ENCODE measurements at regions of chr2 and their contacts with region 1.

Region 1: DNA sequence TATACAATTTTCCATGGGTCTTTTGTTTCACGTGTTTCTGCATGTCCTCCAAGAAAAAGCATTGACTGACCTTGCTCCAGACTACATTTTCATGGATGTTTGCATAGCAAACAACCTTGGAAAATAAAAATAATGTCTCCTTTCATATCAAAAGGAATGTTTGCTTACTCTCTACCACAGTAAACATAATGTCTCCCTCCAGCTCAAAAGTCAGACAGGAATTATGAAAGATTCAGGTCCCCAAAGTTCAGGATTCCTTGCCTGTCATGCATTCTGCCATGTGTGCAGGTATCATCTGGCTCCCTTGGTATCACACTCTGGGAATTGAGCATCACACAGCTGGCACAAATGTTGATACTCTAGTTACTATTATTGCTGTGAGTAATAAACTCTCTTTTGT is 103.1 kb upstream of the ZC3H15 start:
- DNase-seq: peak; percentile 98
- ATAC-seq: peak; percentile 99
- H3K4me3 ChIP-seq: peak overlapping the region in 2 of 3 experiments; percentile 3 to 7; a peak in 1 of 6 replicates
- H3K27ac ChIP-seq: peak overlapping the region; percentile 76
- H3K4me1 ChIP-seq: peaks cover 62% of the 10 kb centered on the region
- H3K27me3 ChIP-seq: no peaks in the 10 kb centered on the region
- CTCF ChIP-seq: no peak
- EP300 ChIP-seq: peak; percentile 76 to 98
- POLR2A ChIP-seq: no peak
- RAD21 ChIP-seq: no peak

Region 2: DNA sequence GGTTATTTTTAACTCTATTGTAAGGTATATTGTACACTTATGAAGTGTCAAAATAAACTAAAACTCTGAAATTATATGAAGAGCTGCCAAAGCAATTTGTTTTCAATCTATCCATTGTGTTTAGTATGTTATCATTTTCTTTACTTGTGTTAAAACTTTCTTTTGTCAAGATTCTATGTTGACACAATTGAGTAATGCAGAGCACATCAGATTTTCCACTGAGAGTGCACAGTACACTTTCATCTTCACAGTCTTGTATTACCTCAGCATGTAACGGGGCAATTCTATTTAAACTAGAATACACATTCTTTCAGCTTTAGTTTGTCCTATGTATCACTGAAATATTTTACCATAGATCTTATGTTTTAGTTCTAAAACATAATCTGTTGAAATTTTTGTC is 201.3 kb before region 1 on chr2:
- CTCF ChIA-PET with region 1: no interaction called
- POLR2A ChIA-PET with region 1: no interaction called
- in situ Hi-C with region 1: no loop called
- intact Hi-C with region 1: loop called (anchors 1 kb)
- DNase-seq: peak; percentile 93
- ATAC-seq: peak; percentile 100
- H3K4me3 ChIP-seq: peak overlapping the region in 1 of 3 experiments; percentile 4; a peak in 1 of 6 replicates
- H3K27ac ChIP-seq: peak overlapping the region; percentile 33
- H3K4me1 ChIP-seq: peaks cover 16% of the 10 kb centered on the region
- H3K27me3 ChIP-seq: no peaks in the 10 kb centered on the region
- CTCF ChIP-seq: no peak
- EP300 ChIP-seq: peak; percentile 82 to 86; a peak in 3 of 4 replicates
- POLR2A ChIP-seq: no peak
- RAD21 ChIP-seq: no peak

Region 3: GRCh38 chr2:186304064-186304463 is 78.9 kb before region 1 on chr2:
- CTCF ChIA-PET with region 1: no interaction called
- POLR2A ChIA-PET with region 1: interaction called, 4 read pairs
- in situ Hi-C with region 1: no loop called
- intact Hi-C with region 1: loop called (anchors 1 kb)
- DNase-seq: peak; percentile 68
- ATAC-seq: peak; percentile 89
- H3K4me3 ChIP-seq: no peak overlapping the region
- H3K27ac ChIP-seq: no peak overlapping the region
- H3K4me1 ChIP-seq: peaks cover 40% of the 10 kb centered on the region
- H3K27me3 ChIP-seq: no peaks in the 10 kb centered on the region
- CTCF ChIP-seq: no peak
- EP300 ChIP-seq: peak in 1 of 2 experiments; percentile 47; a peak in 1 of 4 replicates
- POLR2A ChIP-seq: no peak
- RAD21 ChIP-seq: no peak

Region 4: DNA sequence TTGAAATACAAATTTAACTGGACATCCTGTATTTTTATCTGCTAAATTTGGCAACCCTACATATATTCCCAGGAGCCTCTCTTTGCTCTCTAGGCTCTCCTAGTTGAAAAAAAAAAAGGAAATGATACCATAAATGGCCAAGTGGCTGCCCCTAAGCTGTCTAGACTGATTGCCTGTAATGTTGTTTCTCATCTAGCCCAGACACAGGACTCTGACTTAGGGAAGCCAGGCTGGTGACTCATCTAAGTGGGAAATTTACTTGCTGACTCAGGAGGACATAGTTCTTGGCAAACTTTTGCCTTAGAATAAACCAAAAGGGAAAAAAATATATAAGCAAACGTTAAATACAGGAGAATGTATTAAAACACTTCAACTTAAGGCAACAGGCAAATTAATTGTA is 192.4 kb after region 1 on chr2:
- CTCF ChIA-PET with region 1: no interaction called
- POLR2A ChIA-PET with region 1: no interaction called
- in situ Hi-C with region 1: no loop called
- intact Hi-C with region 1: no loop called
- DNase-seq: peak; percentile 94
- ATAC-seq: peak; percentile 97
- H3K4me3 ChIP-seq: no peak overlapping the region
- H3K27ac ChIP-seq: no peak overlapping the region
- H3K4me1 ChIP-seq: peaks cover 26% of the 10 kb centered on the region
- H3K27me3 ChIP-seq: no peaks in the 10 kb centered on the region
- CTCF ChIP-seq: no peak
- EP300 ChIP-seq: peak in 1 of 2 experiments; percentile 54; a peak in 1 of 4 replicates
- POLR2A ChIP-seq: no peak
- RAD21 ChIP-seq: no peak